Activated T-helper 1 cell treated with anti-CD3 and anti-CD28 coated beads, Interleukin-12 subunit alpha, Interleukin-12 subunit beta, Interleukin-2, Interleukin-4 antibody, amounts not matched to agents 30 ng/mL and 10 ng/mL and 1 ng/mL, durations not matched to agents 14 hours and 24 hours and 36 hours (primary cell): ENCODE measurements at regions of chr1 and their contacts with region 1.

Region 1: DNA sequence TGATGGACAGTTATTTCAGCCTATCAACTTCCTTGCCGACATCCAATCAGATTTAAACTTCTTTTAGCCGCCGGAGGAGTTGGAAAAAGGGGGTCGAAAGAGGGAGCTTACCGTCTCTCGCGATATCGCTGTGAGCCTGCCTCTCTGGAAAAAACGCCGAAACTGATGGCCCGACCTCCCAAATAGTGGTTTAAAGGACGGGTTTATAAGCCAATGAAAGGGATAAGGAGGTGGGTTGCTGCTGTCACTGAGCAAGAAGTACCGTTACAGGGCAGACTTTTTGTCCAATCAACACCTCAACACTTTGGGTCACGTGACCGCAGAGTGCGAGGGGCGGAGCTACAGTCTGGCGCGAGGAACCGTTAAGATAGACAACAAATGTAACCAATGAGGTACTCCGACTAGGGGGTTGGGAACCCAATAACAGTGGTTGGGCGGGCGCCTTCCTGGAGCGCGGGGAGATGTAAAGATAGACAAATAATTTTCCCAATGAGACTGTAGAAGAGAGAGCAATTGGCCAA is at the start of gene RBM15:
- DNase-seq: peak; percentile 98
- H3K4me3 Mint-ChIP-seq: no peak within 1 kb of the TSS
- H3K27ac Mint-ChIP-seq: peak within 1 kb of the TSS; percentile 98
- H3K4me1 Mint-ChIP-seq: peaks cover 54% of the 10 kb centered on the region
- H3K27me3 Mint-ChIP-seq: no peaks in the 10 kb centered on the region
- total RNA-seq, gene RBM15: 58.5 and 59.0 TPM in 2 replicates

Region 2: GRCh38 chr1:108963052-108963686 is 1375.8 kb before region 1 on chr1 and contains the start of gene CLCC1:
- intact Hi-C with region 1: loop called (anchors 10 kb)
- DNase-seq: peak; percentile 93
- H3K4me3 Mint-ChIP-seq: peak within 1 kb of the TSS; percentile 89
- H3K27ac Mint-ChIP-seq: peak within 1 kb of the TSS; percentile 94
- H3K4me1 Mint-ChIP-seq: peaks cover 26% of the 10 kb centered on the region
- H3K27me3 Mint-ChIP-seq: peaks cover 4% of the 10 kb centered on the region
- total RNA-seq, gene CLCC1: 23.1 and 23.4 TPM in 2 replicates

Region 3: DNA sequence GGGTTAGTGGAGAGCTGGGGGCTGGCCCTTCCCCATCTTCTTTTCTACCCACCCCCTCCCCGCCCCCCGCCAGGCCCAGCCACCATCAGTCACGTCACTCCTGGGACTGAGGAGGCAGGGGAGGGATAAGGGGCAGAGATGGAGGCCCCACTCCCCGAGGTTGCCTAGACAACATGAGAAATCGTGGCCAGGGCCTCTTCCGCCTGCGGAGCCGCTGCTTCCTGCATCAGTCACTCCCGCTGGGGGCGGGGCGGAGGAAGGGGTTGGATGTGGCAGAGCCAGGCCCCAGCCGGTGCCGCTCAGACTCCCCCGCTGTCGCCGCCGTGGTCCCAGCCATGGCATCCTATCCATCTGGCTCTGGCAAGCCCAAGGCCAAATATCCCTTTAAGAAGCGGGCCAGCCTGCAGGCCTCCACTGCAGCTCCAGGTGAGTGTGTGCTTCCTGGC is 718.1 kb before region 1 on chr1:
- intact Hi-C with region 1: loop called (anchors 2 kb)
- DNase-seq: peak; percentile 96
- H3K4me3 Mint-ChIP-seq: peak overlapping the region; percentile 95
- H3K27ac Mint-ChIP-seq: peak overlapping the region; percentile 97
- H3K4me1 Mint-ChIP-seq: peaks cover 64% of the 10 kb centered on the region
- H3K27me3 Mint-ChIP-seq: peaks cover 2% of the 10 kb centered on the region

Region 4: GRCh38 chr1:110209715-110210603 is 129.0 kb before region 1 on chr1 and contains the start of gene KCNC4:
- intact Hi-C with region 1: loop called (anchors 1 kb)
- DNase-seq: peak; percentile 88
- H3K4me3 Mint-ChIP-seq: peak within 1 kb of the TSS; percentile 88
- H3K27ac Mint-ChIP-seq: peak within 1 kb of the TSS; percentile 87
- H3K4me1 Mint-ChIP-seq: peaks cover 40% of the 10 kb centered on the region
- H3K27me3 Mint-ChIP-seq: peaks cover 13% of the 10 kb centered on the region
- total RNA-seq, gene KCNC4: 11.8 and 14.3 TPM in 2 replicates

Region 5: DNA sequence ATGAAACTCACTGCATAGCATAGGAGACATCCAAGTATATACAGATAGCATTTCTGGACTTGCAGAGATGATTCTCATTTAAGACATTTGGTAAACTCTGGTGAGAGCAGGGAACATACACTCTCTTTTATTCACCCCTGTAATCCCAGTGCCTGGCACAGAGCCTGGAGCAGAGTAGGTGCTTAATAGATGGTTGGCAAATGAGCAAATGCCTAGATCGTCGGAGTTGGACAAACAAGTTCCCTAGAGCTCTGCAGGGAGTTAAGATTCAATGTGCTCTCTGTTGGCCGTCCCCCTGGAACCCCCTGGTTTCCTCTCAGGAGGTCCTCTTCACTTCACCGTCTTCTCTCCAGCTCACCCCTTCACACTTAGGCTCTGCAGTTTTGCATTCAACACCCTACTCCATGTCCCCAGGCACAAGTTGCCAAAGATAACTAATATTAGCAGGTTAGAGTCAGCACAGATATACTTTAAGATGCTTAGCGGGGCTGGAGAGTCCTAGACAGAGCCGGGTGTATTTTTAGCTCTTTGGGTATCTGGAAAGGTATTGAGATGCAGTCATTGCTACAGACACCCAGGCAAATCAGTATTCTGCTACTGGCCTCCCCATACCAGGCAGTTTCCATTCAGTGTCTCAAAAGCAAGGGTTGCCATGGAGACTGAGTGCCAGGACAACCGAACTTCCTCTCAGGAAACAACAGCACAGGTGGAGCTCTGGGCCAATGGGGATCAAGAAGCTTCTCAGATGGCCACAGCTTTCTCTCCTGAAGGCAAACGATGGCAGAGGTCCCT is 83.8 kb before region 1 on chr1:
- intact Hi-C with region 1: no loop called
- DNase-seq: no peak
- H3K4me3 Mint-ChIP-seq: no peak overlapping the region
- H3K27ac Mint-ChIP-seq: no peak overlapping the region
- H3K4me1 Mint-ChIP-seq: peaks cover 9% of the 10 kb centered on the region
- H3K27me3 Mint-ChIP-seq: no peaks in the 10 kb centered on the region

Region 6: DNA sequence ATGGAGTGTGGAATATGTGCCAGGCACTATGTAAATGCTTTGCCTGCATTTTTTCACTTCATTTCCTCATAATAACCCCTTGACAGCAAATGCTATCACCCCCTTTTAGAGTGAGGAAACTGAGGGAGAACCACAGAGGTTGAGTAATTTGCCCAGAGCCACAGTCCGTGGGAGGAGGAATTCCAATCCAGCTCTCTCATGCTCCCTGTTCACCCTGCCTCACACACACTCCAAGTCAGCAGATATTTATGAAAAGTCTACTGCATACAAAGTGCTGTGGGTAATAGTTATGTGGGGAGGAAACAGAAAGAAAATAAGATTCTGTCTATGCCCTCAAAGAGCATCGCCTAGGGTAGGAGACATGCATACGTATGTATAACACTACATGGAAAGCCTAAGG is 30.7 kb before region 1 on chr1:
- intact Hi-C with region 1: no loop called
- DNase-seq: no peak
- H3K4me3 Mint-ChIP-seq: no peak overlapping the region
- H3K27ac Mint-ChIP-seq: no peak overlapping the region
- H3K4me1 Mint-ChIP-seq: no peaks in the 10 kb centered on the region
- H3K27me3 Mint-ChIP-seq: no peaks in the 10 kb centered on the region

Region 7: GRCh38 chr1:110460253-110461220 is 121.6 kb after region 1 on chr1:
- intact Hi-C with region 1: loop called (anchors 1 kb)
- DNase-seq: peak; percentile 77
- H3K4me3 Mint-ChIP-seq: no peak overlapping the region
- H3K27ac Mint-ChIP-seq: no peak overlapping the region
- H3K4me1 Mint-ChIP-seq: no peaks in the 10 kb centered on the region
- H3K27me3 Mint-ChIP-seq: no peaks in the 10 kb centered on the region

Region 8: DNA sequence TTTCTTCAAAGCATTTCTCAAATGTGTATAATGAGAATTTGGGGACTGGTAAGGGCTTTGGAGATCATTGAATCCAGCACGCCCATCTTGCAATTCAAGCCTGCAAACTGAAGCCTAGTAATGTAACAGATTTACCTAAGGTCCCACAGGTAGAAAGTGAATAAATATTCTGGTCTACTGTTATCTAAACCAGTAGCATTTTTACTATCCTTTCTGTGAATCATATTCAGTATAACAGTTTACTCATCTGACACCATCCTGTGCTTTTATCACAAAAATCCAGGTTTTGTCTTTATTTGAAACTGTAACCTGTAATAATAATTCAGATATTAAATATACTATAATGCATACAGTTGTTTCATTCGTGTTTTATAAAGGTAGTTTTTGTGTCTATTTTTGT is 318.4 kb after region 1 on chr1:
- intact Hi-C with region 1: no loop called
- DNase-seq: no peak
- H3K4me3 Mint-ChIP-seq: no peak overlapping the region
- H3K27ac Mint-ChIP-seq: no peak overlapping the region
- H3K4me1 Mint-ChIP-seq: peaks cover 58% of the 10 kb centered on the region
- H3K27me3 Mint-ChIP-seq: no peaks in the 10 kb centered on the region

Region 9: DNA sequence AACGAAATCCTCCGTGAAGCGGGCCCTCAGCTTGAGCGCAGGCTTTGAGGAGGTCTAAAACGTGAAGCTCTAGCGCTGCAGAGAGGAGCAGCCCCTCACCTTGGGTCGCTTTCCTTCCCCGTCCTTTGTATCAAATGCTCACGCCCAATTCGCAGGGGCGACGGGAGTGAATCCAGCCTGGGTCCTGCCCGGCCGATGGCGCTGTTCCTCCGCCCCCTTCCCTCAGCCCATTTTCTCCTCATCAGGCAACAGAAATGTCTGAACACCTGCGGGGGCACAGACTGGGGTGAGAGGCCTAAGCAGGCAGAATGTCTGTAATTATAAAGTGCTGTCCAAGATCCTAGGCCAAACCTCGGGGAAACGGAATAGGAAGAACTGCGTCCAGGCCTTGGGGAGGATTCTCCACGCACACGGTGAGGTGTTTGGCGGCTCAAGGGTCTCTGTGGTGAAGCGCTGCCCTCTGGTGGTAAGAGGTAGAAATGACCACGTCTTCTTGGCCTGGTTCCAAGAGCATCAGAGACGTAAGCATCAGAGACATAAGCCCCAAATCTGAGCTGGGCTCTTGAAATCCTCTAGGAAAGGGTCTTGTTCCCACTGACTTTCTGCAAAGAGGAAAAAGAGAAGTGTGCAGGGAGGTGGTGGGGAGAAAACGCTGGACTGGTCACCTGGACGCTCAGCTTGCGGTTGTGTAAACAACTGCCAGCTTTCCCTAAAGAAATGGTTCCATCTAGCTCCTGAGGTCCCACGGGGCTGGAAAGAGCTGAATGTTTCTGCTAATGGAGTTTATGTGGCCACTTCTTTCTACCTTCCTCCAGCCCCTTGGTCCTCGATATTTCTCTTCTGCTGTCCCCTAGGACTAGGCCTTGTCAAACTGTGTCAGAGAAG is 441.9 kb after region 1 on chr1:
- intact Hi-C with region 1: loop called (anchors 10 kb)
- DNase-seq: peak; percentile 68
- H3K4me3 Mint-ChIP-seq: no peak overlapping the region
- H3K27ac Mint-ChIP-seq: no peak overlapping the region
- H3K4me1 Mint-ChIP-seq: peaks cover 19% of the 10 kb centered on the region
- H3K27me3 Mint-ChIP-seq: no peaks in the 10 kb centered on the region

Region 10: GRCh38 chr1:111755331-111756123 is 1416.6 kb after region 1 on chr1 and contains the start of gene DDX20:
- intact Hi-C with region 1: loop called (anchors 2 kb)
- DNase-seq: peak; percentile 92
- H3K4me3 Mint-ChIP-seq: peak within 1 kb of the TSS; percentile 83
- H3K27ac Mint-ChIP-seq: peak within 1 kb of the TSS; percentile 97
- H3K4me1 Mint-ChIP-seq: peaks cover 35% of the 10 kb centered on the region
- H3K27me3 Mint-ChIP-seq: peaks cover 12% of the 10 kb centered on the region
- total RNA-seq, gene DDX20: 21.5 and 25.2 TPM in 2 replicates